ENCODE measurements at regions of chr5 and their contacts with region 1.

Region 1: DNA sequence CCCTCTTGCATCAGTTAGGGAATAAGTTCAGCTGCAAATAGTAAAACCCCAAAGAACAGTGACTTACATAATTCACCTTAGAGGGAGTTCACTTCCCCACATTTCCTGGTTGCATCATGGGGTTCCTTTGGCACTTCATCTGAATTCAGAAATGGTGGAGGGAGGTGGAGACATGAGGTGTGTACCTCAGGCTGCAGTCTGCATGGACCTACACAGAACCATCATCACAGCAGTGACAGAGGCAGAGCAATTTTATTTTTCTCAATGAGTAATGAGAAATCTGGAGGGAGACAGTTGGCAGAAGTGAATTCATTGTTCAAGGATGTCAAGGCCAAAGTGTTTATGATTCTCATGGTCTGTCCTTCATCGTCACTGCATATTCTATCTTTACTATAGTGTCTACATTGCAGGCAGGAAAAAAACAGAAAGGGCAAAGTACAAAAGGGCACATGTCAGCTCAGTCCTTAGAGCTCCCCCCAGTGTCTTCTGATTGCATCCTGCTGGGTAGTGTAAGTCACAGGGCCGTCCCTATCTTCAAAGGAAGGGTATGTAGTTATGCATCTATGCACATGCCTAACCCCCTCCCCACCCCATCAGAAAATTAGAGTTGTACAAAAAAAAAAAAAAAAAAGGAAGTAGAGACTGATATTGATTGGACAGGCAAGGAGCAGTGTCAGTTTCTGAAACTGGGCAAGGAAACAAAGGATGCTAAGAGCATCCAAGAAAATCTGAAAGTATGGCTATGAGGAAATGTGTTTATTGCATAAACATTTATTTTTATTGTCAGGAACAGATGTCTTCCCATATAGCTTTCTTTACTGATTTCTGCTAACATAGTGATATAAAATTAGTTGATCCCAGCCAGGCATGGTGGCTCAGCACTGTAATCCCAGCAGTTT is 132.7 kb upstream of the APC start:
- DNase-seq: peak; percentile 13
- ATAC-seq: peak; percentile 97
- H3K4me3 ChIP-seq: no peak overlapping the region
- H3K27ac ChIP-seq: no peak overlapping the region
- H3K4me1 ChIP-seq: no peaks in the 10 kb centered on the region
- H3K27me3 ChIP-seq: no peaks in the 10 kb centered on the region; a peak in 1 of 4 replicates
- CTCF ChIP-seq: peak; percentile 44 to 65 (median 60); a peak in 5 of 6 replicates
- EP300 ChIP-seq: no peak
- POLR2A ChIP-seq: no peak
- RAD21 ChIP-seq: peak; percentile 44

Region 2: DNA sequence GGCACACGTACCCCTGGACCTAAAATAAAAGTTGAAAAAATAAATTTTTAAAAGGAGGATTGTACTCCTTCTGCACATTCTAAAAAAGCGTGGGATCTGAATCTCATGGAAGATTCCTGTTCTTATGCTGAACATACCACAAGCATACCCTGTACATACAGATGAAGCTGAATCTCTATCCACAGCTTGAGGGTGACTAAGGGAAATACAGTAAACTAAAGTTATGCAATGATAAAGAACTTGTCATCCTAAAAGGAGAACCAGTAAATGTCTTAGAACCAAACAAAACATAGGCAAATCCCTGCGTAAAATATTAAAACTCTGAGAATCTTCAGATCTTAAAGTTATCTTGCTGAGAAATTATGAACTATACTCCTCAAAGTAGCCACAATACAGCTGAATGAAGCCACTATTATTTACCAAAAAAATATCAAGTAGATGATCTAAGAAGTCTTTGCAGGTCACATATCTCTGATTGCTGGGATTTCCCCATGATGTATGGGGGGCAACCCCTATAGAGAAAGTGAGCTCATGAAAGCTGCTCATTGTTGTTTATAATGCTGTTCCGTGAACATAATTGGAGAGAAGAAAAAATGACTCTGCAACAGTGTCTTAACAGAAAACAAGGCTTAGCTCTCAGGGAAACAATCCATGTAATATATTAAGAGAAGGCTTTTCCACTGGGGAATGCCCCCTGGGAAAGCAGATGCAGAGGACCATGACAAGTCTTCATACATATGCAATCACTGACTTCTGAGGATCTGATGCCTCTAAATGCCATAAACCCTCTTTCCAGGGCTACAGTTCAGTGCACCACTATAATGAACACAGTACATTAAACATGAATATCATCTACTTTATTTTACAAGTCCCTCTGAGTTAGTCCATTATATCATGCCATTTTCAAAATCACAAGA is 396.0 kb before region 1 on chr5:
- CTCF ChIA-PET with region 1: no interaction called
- POLR2A ChIA-PET with region 1: no interaction called
- RAD21 ChIA-PET with region 1: no interaction called
- SMC1A ChIA-PET with region 1: no interaction called
- in situ Hi-C with region 1: no loop called
- intact Hi-C with region 1: loop called (anchors 10 kb)
- DNase-seq: no peak
- ATAC-seq: peak; percentile 88
- H3K4me3 ChIP-seq: no peak overlapping the region
- H3K27ac ChIP-seq: no peak overlapping the region
- H3K4me1 ChIP-seq: no peaks in the 10 kb centered on the region
- H3K27me3 ChIP-seq: no peaks in the 10 kb centered on the region
- CTCF ChIP-seq: no peak
- EP300 ChIP-seq: no peak
- POLR2A ChIP-seq: no peak
- RAD21 ChIP-seq: no peak

Measured in GM12878 (cell line).